MCF 10A (cell line): ENCODE measurements at regions of chr9 and their contacts with region 1.

Region 1: GRCh38 chr9:551986-552929 is 289.2 kb upstream of the DMRT1 start:
- DNase-seq: peak; percentile 22
- H3K4me3 Mint-ChIP-seq: no peak overlapping the region
- H3K27ac Mint-ChIP-seq: no peak overlapping the region
- H3K4me1 Mint-ChIP-seq: peaks cover 30% of the 10 kb centered on the region
- H3K27me3 Mint-ChIP-seq: no peaks in the 10 kb centered on the region
- CTCF ChIP-seq: no peak

Region 2: DNA sequence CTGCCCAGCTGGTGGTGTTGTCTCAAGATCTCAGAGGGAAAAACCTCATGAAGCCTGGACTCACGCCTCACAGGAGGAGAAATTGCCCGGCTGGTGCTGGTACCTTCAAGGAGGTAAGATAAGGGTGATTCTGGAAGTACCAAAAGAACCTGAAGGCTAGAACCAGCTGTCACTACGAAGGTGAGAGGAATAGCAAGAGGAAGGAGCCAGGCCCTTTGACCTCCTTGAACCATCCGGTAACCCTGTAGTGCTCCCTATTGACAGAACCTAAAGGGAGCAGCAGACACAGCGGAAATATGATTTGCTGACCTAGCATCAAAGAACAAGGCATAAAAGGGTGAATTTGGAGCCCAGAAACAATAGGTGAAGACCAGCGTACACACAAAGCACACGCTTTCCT is 245.4 kb before region 1 on chr9:
- CTCF ChIA-PET with region 1: no interaction called
- POLR2A ChIA-PET with region 1: no interaction called
- intact Hi-C with region 1: no loop called
- DNase-seq: peak; percentile 43
- H3K4me3 Mint-ChIP-seq: no peak overlapping the region
- H3K27ac Mint-ChIP-seq: no peak overlapping the region
- H3K4me1 Mint-ChIP-seq: peaks cover 6% of the 10 kb centered on the region
- H3K27me3 Mint-ChIP-seq: no peaks in the 10 kb centered on the region
- CTCF ChIP-seq: no peak

Region 3: DNA sequence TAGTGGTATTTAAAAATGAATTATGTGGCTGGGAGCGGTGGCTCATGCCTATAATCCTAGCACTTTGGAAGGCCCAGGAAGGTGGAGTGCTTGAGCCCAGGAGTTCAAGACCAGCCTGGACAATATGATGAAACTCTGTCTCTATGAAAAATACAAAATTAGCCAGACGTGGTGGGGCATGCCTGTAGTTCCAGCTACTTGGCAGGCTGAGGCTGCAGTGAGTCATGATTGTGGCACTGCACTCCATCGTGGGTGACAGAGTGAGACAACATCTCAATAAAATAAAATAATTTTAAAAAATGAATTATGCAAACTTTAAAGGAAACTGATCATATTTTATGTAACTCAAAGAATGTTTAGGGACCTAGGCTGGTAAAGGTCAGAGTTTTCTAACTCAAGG is 21.6 kb before region 1 on chr9:
- CTCF ChIA-PET with region 1: no interaction called
- POLR2A ChIA-PET with region 1: interaction called, 30 read pairs
- intact Hi-C with region 1: no loop called
- DNase-seq: peak; percentile 87
- H3K4me3 Mint-ChIP-seq: peak overlapping the region; percentile 22
- H3K27ac Mint-ChIP-seq: peak overlapping the region; percentile 98
- H3K4me1 Mint-ChIP-seq: peaks cover 49% of the 10 kb centered on the region
- H3K27me3 Mint-ChIP-seq: no peaks in the 10 kb centered on the region
- CTCF ChIP-seq: no peak

Region 4: GRCh38 chr9:573671-574410 is 21.6 kb after region 1 on chr9:
- CTCF ChIA-PET with region 1: interaction called, 3 read pairs
- POLR2A ChIA-PET with region 1: interaction called, 74 read pairs
- intact Hi-C with region 1: no loop called
- DNase-seq: no peak
- H3K4me3 Mint-ChIP-seq: no peak overlapping the region
- H3K27ac Mint-ChIP-seq: no peak overlapping the region
- H3K4me1 Mint-ChIP-seq: peaks cover 15% of the 10 kb centered on the region
- H3K27me3 Mint-ChIP-seq: no peaks in the 10 kb centered on the region
- CTCF ChIP-seq: no peak

Region 5: DNA sequence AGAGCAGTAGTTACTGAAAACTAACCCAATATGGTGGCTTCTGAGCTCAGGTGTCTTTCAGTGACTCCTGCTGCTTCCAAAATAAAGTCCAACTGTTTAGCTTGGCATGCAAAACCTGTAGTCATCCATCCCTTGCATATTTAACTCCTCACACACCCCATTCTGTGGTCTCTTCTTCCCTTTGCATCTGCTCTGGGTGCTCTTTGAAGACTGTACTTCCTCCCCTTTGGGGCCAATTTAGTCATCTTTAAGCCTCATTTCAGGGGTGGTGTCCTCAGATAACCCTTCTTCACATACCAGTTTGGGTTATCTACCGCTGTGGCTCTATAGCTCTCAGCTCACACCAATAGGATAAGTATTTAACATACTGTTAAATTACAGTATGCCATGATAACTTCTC is 79.3 kb after region 1 on chr9:
- CTCF ChIA-PET with region 1: no interaction called
- POLR2A ChIA-PET with region 1: no interaction called
- intact Hi-C with region 1: no loop called
- DNase-seq: peak; percentile 17
- H3K4me3 Mint-ChIP-seq: no peak overlapping the region
- H3K27ac Mint-ChIP-seq: peak overlapping the region; percentile 0
- H3K4me1 Mint-ChIP-seq: peaks cover 22% of the 10 kb centered on the region
- H3K27me3 Mint-ChIP-seq: no peaks in the 10 kb centered on the region
- CTCF ChIP-seq: no peak